B cell (primary cell): ENCODE measurements at regions of chr7 and their contacts with region 1.

Region 1: DNA sequence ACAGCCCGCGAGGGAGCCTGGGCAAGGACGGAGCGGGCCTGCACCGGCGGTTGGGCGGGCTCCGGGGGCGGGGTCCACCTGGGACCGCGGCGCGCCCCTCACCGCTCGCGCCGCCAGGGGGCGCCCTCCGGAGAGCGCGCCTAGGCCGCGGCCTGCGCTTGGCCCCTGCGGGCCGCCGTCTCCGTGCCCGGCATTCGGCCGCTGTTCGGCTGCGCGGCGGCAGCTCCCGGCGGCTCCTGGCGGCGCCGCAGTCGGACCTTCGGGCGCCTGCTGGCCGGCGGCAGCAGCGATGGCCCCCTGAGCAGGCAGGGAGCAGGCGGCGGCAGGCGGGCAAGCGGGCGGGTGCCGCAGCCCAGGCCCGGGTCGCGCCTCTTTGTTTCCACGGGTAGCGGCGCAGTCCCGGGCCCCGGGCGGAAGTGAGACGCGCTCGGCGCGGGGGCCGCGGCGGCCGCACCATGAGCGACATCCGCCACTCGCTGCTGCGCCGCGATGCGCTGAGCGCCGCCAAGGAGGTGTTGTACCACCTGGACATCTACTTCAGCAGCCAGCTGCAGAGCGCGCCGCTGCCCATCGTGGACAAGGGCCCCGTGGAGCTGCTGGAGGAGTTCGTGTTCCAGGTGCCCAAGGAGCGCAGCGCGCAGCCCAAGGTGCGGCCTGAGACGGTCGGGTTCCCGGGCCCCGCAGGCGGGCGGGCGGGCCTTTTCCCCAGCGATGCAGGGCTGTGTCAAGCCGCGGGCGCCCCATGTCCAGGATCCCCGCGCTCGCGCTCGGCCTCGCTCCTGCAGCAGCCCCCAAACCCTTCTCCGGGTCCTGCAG is at the start of gene INTS15:
- DNase-seq: peak; percentile 94
- ATAC-seq: peak; percentile 91
- H3K4me3 ChIP-seq: peak within 1 kb of the TSS; percentile 45 to 82 (median 74)
- H3K4me3 Mint-ChIP-seq: peak within 1 kb of the TSS; percentile 88
- H3K27ac ChIP-seq: peak within 1 kb of the TSS; percentile 54 to 76
- H3K27ac Mint-ChIP-seq: peak within 1 kb of the TSS; percentile 88
- H3K4me1 ChIP-seq: peaks cover 15 to 19% of the 10 kb centered on the region in 2 donors
- H3K4me1 Mint-ChIP-seq: peaks cover 13% of the 10 kb centered on the region
- H3K27me3 ChIP-seq: no peaks in the 10 kb centered on the region
- H3K27me3 Mint-ChIP-seq: no peaks in the 10 kb centered on the region
- CTCF ChIP-seq: peak; percentile 74
- total RNA-seq, gene INTS15: 57.1 and 57.8 TPM in 2 replicates

Region 2: GRCh38 chr7:6495597-6496262 is 94.3 kb before region 1 on chr7:
- CTCF ChIA-PET with region 1: no interaction called
- POLR2A ChIA-PET with region 1: no interaction called
- intact Hi-C with region 1: no loop called
- DNase-seq: no peak
- ATAC-seq: no peak
- H3K4me3 ChIP-seq: no peak overlapping the region
- H3K4me3 Mint-ChIP-seq: no peak overlapping the region
- H3K27ac ChIP-seq: no peak overlapping the region
- H3K27ac Mint-ChIP-seq: no peak overlapping the region
- H3K4me1 ChIP-seq: no peaks in the 10 kb centered on the region
- H3K4me1 Mint-ChIP-seq: no peaks in the 10 kb centered on the region
- H3K27me3 ChIP-seq: no peaks in the 10 kb centered on the region
- H3K27me3 Mint-ChIP-seq: peaks cover 4% of the 10 kb centered on the region
- CTCF ChIP-seq: no peak

Region 3: DNA sequence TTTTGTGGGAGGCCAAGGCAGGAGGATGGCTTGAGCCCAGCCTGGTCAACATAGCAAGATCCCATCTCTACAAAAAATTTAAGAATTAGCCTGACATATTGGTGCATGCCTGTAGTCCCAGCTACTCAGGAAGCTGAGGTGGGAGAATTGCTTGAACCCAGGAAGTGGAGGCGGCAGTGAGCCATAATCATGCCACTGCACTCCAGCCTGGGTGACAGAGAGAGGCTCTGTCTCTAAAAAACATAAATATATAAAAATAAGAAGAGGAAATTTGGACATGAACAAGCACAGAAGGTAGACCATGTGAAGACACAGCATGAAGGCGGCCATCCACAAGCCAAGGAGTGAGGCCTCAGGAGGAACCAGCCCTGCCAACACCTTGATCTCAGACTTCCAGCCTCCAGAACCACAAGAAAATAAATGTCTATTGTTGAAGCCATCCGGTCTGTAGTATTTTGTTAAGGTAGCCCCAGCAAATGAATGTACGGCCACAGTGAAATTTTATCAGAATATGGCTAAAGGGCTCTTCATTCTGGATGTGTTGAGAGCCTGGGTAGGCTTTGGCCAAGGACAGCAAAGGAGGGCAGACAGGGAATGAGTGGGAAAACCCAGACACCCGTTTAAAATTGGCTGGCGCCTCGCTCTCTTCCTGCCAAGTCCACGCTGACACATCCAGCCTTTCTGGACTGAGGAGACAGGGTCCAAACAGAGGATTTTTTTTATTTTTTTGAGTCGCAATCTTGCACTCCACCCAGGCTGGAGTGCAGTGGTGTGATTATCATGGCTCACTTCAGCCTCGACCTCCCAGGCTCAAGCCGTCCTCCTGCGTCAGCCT is 25.9 kb before region 1 on chr7:
- CTCF ChIA-PET with region 1: no interaction called
- POLR2A ChIA-PET with region 1: no interaction called
- intact Hi-C with region 1: no loop called
- DNase-seq: no peak
- ATAC-seq: no peak
- H3K4me3 ChIP-seq: no peak overlapping the region
- H3K4me3 Mint-ChIP-seq: no peak overlapping the region
- H3K27ac ChIP-seq: no peak overlapping the region
- H3K27ac Mint-ChIP-seq: no peak overlapping the region
- H3K4me1 ChIP-seq: no peaks in the 10 kb centered on the region
- H3K4me1 Mint-ChIP-seq: no peaks in the 10 kb centered on the region
- H3K27me3 ChIP-seq: no peaks in the 10 kb centered on the region
- H3K27me3 Mint-ChIP-seq: peaks cover 13% of the 10 kb centered on the region
- CTCF ChIP-seq: no peak

Region 4: DNA sequence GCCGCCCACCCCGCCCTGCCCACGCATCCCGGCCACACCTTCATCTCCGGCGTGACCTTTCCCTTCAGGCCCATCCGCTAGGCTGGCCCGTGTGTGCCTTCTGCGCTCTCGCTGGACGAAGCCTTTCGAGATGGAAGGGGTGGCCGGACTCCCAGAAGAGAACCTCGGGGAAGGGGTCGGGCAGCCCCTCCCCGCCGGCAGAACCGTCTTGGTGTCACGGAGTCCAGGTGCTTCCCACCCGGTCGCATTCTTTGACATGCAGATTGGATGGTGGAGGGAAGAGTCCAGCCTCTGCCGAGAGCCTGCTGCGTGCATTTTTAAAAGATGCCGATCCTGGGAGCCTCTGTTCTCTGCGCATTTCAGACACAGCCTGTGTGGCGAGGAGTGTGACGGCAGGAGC is 18.0 kb after region 1 on chr7:
- CTCF ChIA-PET with region 1: interaction called, 4 read pairs
- POLR2A ChIA-PET with region 1: interaction called, 10 read pairs
- intact Hi-C with region 1: no loop called
- DNase-seq: no peak
- ATAC-seq: no peak
- H3K4me3 ChIP-seq: no peak overlapping the region
- H3K4me3 Mint-ChIP-seq: no peak overlapping the region
- H3K27ac ChIP-seq: no peak overlapping the region
- H3K27ac Mint-ChIP-seq: no peak overlapping the region
- H3K4me1 ChIP-seq: no peaks in the 10 kb centered on the region
- H3K4me1 Mint-ChIP-seq: no peaks in the 10 kb centered on the region
- H3K27me3 ChIP-seq: no peaks in the 10 kb centered on the region
- H3K27me3 Mint-ChIP-seq: peaks cover 4% of the 10 kb centered on the region
- CTCF ChIP-seq: no peak

Region 5: GRCh38 chr7:6637544-6638229 is 47.6 kb after region 1 on chr7:
- CTCF ChIA-PET with region 1: interaction called, 5 read pairs
- POLR2A ChIA-PET with region 1: interaction called, 3 read pairs
- intact Hi-C with region 1: loop called (anchors 1 kb)
- DNase-seq: peak; percentile 86
- ATAC-seq: peak; percentile 86
- H3K4me3 ChIP-seq: peak overlapping the region in 4 of 5 experiments; percentile 37 to 69 (median 61)
- H3K4me3 Mint-ChIP-seq: peak overlapping the region; percentile 86
- H3K27ac ChIP-seq: peak overlapping the region; percentile 18 to 79
- H3K27ac Mint-ChIP-seq: peak overlapping the region; percentile 88
- H3K4me1 ChIP-seq: peaks cover 20 to 25% of the 10 kb centered on the region in 2 donors
- H3K4me1 Mint-ChIP-seq: peaks cover 35% of the 10 kb centered on the region
- H3K27me3 ChIP-seq: no peaks in the 10 kb centered on the region
- H3K27me3 Mint-ChIP-seq: no peaks in the 10 kb centered on the region
- CTCF ChIP-seq: peak; percentile 69